GM13976 (cell line): ENCODE measurements at regions of chr2 and their contacts with region 1.

Region 1: DNA sequence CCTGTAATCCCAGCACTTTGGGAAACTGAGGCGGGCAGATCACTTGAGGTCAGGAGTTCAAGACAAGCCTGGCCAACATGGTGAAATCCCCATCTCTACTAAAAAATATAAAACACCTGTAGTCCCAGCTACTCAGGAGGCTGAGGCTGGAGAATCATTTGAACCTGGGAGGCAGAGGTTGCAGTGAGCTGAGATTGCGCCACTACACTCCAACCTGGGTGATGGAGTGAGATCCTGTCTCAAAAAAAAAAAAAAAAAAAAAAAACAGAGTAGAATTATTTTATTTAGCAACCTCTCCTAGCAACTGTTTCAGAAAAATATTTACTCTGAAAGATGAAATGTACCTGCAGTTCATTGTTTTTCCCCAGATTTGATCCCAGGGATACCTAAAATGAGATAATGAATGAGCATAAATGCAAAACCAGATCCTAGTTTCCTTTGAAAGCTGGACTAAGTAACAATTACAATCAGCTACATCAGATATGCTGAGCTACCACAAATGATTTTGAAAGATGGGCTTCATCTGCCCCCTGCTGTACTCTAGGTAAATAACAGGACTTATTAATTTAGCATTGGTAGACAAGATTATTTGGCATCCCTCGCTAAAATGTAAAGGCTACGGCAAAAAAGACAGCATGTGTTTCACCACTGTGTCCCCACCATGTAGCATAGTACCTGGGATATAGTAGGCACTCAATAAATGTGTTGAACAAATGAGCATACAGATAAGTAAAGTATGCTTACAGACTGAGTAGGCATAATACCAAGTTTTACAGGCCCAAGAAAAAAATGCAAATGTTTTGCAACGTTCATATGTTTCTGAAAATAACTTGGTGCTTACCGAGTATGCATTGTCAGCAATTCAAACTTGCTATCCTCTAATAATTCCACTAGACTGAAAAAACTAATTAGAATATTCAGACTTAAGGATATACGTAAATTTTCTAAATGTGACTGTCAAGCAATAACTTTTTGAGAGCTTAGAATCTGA is 102.5 kb downstream of the ATL2 start:
- DNase-seq: peak; percentile 69
- CTCF ChIP-seq: peak; percentile 48

Region 2: GRCh38 chr2:37786854-37787253 is 487.7 kb before region 1 on chr2:
- in situ Hi-C with region 1: no loop called
- DNase-seq: no peak
- CTCF ChIP-seq: no peak

Region 3: GRCh38 chr2:37982147-37982582 is 292.4 kb before region 1 on chr2:
- in situ Hi-C with region 1: loop called (anchors 10 kb)
- DNase-seq: peak; percentile 20
- CTCF ChIP-seq: peak; percentile 45

Region 4: GRCh38 chr2:38765149-38765548 is 490.6 kb after region 1 on chr2:
- in situ Hi-C with region 1: no loop called
- DNase-seq: no peak
- CTCF ChIP-seq: no peak

Region 5: GRCh38 chr2:38886063-38886462 is 611.5 kb after region 1 on chr2:
- in situ Hi-C with region 1: no loop called
- DNase-seq: no peak
- CTCF ChIP-seq: no peak